MCF 10A (cell line): ENCODE measurements at regions of chr16 and their contacts with region 1.

Region 1: GRCh38 chr16:47141773-47142485 is 1.8 kb downstream of the NETO2 start:
- DNase-seq: peak; percentile 95
- H3K4me3 Mint-ChIP-seq: peak overlapping the region; percentile 80
- H3K27ac Mint-ChIP-seq: peak overlapping the region; percentile 91
- H3K4me1 Mint-ChIP-seq: peaks cover 27% of the 10 kb centered on the region
- H3K27me3 Mint-ChIP-seq: no peaks in the 10 kb centered on the region
- CTCF ChIP-seq: peak; percentile 86

Region 2: GRCh38 chr16:47037746-47038458 is 104.0 kb before region 1 on chr16:
- CTCF ChIA-PET with region 1: interaction called, 22 read pairs
- POLR2A ChIA-PET with region 1: interaction called, 5 read pairs
- intact Hi-C with region 1: loop called (anchors 1 kb)
- DNase-seq: peak; percentile 78
- H3K4me3 Mint-ChIP-seq: peak overlapping the region; percentile 73
- H3K27ac Mint-ChIP-seq: no peak overlapping the region
- H3K4me1 Mint-ChIP-seq: peaks cover 5% of the 10 kb centered on the region
- H3K27me3 Mint-ChIP-seq: no peaks in the 10 kb centered on the region
- CTCF ChIP-seq: peak; percentile 89

Region 3: GRCh38 chr16:47460711-47461597 is 319.0 kb after region 1 on chr16 and contains the starts of genes ITFG1 and PHKB:
- CTCF ChIA-PET with region 1: interaction called, 31 read pairs
- POLR2A ChIA-PET with region 1: interaction called, 50 read pairs
- intact Hi-C with region 1: loop called (anchors 2 kb)
- DNase-seq: peak; percentile 90
- H3K4me3 Mint-ChIP-seq: peak within 1 kb of the TSS; percentile 94
- H3K27ac Mint-ChIP-seq: peak within 1 kb of the TSS; percentile 99
- H3K4me1 Mint-ChIP-seq: peaks cover 35% of the 10 kb centered on the region
- H3K27me3 Mint-ChIP-seq: no peaks in the 10 kb centered on the region
- CTCF ChIP-seq: no peak
- total RNA-seq, gene ITFG1: 35.4 and 44.0 TPM in 2 replicates
- total RNA-seq, gene PHKB: 62.2 and 67.3 TPM in 2 replicates

Region 4: GRCh38 chr16:47732523-47733111 is 590.7 kb after region 1 on chr16:
- CTCF ChIA-PET with region 1: no interaction called
- POLR2A ChIA-PET with region 1: no interaction called
- intact Hi-C with region 1: loop called (anchors 10 kb)
- DNase-seq: peak; percentile 85
- H3K4me3 Mint-ChIP-seq: peak overlapping the region; percentile 14
- H3K27ac Mint-ChIP-seq: peak overlapping the region; percentile 77
- H3K4me1 Mint-ChIP-seq: peaks cover 28% of the 10 kb centered on the region
- H3K27me3 Mint-ChIP-seq: no peaks in the 10 kb centered on the region
- CTCF ChIP-seq: no peak

Region 5: GRCh38 chr16:48156790-48157209 is 1014.9 kb after region 1 on chr16:
- CTCF ChIA-PET with region 1: interaction called, 24 read pairs
- POLR2A ChIA-PET with region 1: interaction called, 3 read pairs
- intact Hi-C with region 1: loop called (anchors 1 kb)
- DNase-seq: peak; percentile 78
- H3K4me3 Mint-ChIP-seq: no peak overlapping the region
- H3K27ac Mint-ChIP-seq: no peak overlapping the region
- H3K4me1 Mint-ChIP-seq: peaks cover 10% of the 10 kb centered on the region
- H3K27me3 Mint-ChIP-seq: no peaks in the 10 kb centered on the region
- CTCF ChIP-seq: peak; percentile 96